ENCODE measurements at regions of chr13 and their contacts with region 1.

Region 1: DNA sequence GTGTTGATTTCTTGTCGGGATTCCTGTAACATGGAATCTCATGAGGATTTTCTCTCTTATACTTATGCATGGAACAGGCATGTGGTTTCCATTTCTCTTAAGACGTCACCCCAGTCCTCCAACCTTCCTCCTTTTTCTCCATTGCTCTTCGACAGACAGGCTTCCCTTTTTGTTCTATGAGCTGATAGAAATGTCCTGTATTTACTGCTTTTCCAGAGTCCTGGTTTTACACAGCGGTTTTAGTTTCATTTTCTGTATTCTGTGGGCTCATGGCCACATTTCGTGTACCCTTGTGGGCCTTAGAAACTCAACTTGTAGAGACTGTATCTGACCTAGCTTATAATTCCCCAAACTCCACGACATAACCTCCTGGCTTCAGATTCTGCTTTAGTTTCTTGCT is 113.1 kb downstream of the PAN3 start:
- DNase-seq: no peak
- ATAC-seq: no peak
- H3K4me3 ChIP-seq: no peak overlapping the region
- H3K4me3 Mint-ChIP-seq: peak overlapping the region; percentile 47
- H3K27ac ChIP-seq: peak overlapping the region in 1 of 2 donors; percentile 87
- H3K27ac Mint-ChIP-seq: peak overlapping the region; percentile 70
- H3K4me1 ChIP-seq: peaks cover 49 to 63% of the 10 kb centered on the region in 2 donors
- H3K4me1 Mint-ChIP-seq: peaks cover 69% of the 10 kb centered on the region
- H3K27me3 ChIP-seq: no peaks in the 10 kb centered on the region
- H3K27me3 Mint-ChIP-seq: no peaks in the 10 kb centered on the region
- CTCF ChIP-seq: no peak

Region 2: DNA sequence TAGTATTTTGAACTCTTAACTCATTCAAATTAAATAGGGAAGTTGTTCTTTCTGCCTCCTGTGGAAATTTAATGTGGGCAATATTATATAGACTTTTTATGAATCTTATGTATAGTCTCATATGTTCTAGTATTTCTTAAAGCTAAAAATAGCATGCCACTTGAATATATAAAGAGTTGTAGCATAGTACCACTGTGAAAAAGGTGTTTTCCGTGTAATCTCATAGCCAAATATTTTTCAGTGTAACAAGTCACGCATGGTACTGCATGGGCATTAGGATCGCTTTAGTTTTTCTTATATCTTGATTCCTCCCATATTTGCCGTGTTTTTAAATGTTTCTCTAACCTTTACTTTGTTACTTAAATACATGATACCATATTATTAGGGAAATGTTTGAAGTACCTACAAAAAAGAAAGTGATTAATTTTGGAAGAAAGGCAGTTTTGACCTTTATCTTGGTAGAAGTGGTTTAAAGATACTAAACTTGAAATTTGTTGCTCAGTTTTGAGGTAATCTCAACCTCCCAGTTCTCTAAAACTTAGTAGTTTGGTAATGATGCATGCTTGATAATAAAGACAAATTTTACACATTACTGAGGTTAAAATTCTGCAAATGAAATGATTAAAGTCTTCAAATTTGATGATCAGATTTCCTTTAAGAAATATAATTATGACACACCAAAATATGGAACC is 31.9 kb before region 1 on chr13:
- CTCF ChIA-PET with region 1: no interaction called
- POLR2A ChIA-PET with region 1: interaction called, 5 read pairs
- intact Hi-C with region 1: loop called (anchors 5 kb)
- DNase-seq: no peak
- ATAC-seq: no peak
- H3K4me3 ChIP-seq: no peak overlapping the region
- H3K4me3 Mint-ChIP-seq: no peak overlapping the region
- H3K27ac ChIP-seq: no peak overlapping the region
- H3K27ac Mint-ChIP-seq: no peak overlapping the region
- H3K4me1 ChIP-seq: no peaks in the 10 kb centered on the region
- H3K4me1 Mint-ChIP-seq: peaks cover 12% of the 10 kb centered on the region
- H3K27me3 ChIP-seq: no peaks in the 10 kb centered on the region
- H3K27me3 Mint-ChIP-seq: no peaks in the 10 kb centered on the region
- CTCF ChIP-seq: no peak